A549 (cell line): ENCODE measurements at regions of chr10 and their contacts with region 1.

Region 1: DNA sequence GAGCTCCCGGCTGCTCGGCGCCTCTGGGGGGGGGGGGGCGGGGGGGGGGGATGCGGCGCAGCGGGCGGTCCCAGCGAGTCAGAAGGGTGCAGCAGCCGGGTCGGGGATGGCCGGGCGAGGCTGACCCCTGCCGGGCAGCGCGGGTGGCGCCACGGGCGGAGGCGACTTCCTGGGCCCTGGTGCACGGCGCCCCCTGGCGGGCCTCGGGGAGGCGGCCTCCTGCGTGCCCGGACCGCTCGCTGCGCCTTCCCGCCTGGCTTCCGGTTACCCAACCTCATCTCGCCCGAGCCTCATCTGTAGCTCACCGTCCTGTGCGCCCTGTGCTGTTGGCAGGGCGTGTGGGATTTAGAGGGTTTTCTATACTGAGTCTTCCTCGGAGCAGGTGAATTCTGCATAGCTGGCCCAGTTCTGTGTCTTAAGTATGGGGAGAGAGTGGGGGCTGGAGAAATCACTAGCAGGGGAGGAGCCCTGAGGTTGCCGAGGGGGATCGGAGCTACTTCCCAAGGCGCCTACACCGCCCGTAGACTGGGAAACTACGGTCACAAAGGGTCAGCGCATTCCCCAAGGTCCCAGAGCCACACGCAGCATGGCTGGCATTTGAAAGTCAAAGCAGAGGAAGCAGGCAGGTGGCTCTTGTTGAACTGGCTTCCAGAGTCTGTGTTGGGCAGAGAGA is 28.3 kb upstream of the WDFY4 start:
- DNase-seq: peak; percentile 58 to 92
- ATAC-seq: peak; percentile 79 to 91
- H3K4me3 ChIP-seq: peak overlapping the region; percentile 56
- H3K27ac ChIP-seq: peak overlapping the region; percentile 74 to 88
- H3K4me1 ChIP-seq: 0 out of 3 replicates have a peak, but pooled peaks cover 3% of the 10 kb centered on the region
- CTCF ChIP-seq: peak; percentile 99
- EP300 ChIP-seq: no peak
- POLR2A ChIP-seq: no peak
- RAD21 ChIP-seq: peak; percentile 67 to 95

Region 2: DNA sequence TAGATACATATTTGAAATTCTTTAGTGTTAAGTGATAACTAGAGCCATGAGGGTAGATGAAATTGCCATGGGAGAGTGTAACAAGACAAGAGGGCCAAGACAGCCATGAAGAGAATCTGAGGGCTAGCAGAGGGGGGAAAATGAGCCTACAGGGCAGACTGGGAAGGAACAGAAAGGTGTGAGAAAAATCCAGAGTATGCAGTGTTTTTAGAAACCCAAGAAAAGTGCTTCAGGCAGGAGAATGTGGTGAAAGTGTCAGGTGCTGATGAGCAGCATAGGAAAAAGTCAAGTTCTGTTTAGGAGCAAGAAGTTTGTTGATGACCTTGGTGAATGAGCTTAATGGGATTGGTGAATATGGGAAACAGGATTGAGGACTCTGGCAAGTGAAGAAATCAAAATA is 286.8 kb before region 1 on chr10:
- CTCF ChIA-PET with region 1: interaction called, 97 read pairs
- POLR2A ChIA-PET with region 1: no interaction called
- DNase-seq: no peak
- ATAC-seq: no peak
- H3K4me3 ChIP-seq: no peak overlapping the region
- H3K27ac ChIP-seq: no peak overlapping the region
- H3K4me1 ChIP-seq: peaks cover 18% of the 10 kb centered on the region
- CTCF ChIP-seq: no peak
- EP300 ChIP-seq: no peak
- POLR2A ChIP-seq: no peak
- RAD21 ChIP-seq: no peak

Region 3: DNA sequence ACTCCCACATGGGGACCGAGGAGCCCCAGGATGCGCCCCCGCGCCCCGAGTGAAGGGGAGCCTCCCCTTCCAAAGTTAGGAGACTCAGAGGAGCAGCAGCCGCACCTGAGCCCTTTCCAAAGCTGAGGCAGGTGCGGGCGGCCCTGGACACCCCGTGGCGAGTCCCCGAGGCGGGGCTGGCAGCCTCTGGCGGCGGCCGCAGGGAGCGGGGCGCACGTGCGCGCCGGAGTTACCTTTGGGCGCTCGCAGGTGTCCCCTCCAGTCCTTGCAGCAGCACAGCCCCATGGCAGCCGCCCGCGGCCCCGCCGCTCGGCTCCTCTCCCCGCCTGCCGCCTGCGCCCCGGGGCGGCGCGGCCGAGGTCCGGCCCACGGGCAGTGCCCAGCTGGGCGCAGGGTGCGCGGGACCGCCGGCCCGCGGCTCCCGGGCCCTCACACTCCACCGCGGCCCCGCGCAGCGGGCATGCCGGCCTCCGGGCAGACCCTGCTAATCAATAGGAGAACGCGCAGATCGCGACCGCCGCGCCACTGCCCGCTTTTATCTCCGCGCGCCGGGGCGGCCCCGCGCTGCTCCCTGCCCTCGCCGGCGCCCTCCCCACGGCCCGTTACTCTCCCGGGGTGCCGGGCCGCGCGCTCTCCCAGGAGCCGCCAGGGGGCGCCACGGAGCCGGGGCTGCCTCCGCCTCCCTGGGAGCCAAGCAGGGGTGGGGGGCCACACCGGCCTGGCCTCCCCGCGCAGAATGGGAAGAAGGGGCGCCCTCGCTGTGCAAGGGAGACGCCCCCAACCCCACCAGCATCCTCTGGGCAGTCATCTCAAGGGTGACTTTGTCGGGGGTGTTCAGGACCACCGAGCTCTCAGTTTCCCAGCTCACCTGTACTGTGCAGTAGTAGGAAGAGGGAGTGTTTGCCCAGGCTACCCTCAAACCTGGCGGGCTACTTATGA is 132.3 kb before region 1 on chr10:
- CTCF ChIA-PET with region 1: interaction called, 26 read pairs
- POLR2A ChIA-PET with region 1: no interaction called
- DNase-seq: peak; percentile 29 to 43
- ATAC-seq: peak; percentile 75 to 87
- H3K4me3 ChIP-seq: peak overlapping the region; percentile 50
- H3K27ac ChIP-seq: peak overlapping the region; percentile 48 to 80; a peak in 5 of 6 replicates
- H3K4me1 ChIP-seq: 0 out of 3 replicates have a peak, but pooled peaks cover 3% of the 10 kb centered on the region
- CTCF ChIP-seq: peak; percentile 72
- EP300 ChIP-seq: no peak
- POLR2A ChIP-seq: no peak
- RAD21 ChIP-seq: peak in 1 of 2 experiments; percentile 29; a peak in 1 of 5 replicates

Region 4: GRCh38 chr10:48608279-48608681 is 48.1 kb before region 1 on chr10:
- CTCF ChIA-PET with region 1: interaction called, 112 read pairs
- POLR2A ChIA-PET with region 1: interaction called, 4 read pairs
- DNase-seq: peak; percentile 57 to 72
- ATAC-seq: peak; percentile 66 to 87; a peak in 5 of 6 replicates
- H3K4me3 ChIP-seq: no peak overlapping the region
- H3K27ac ChIP-seq: no peak overlapping the region
- H3K4me1 ChIP-seq: peaks cover 5% of the 10 kb centered on the region; the same call in 1 of the 3 replicates
- CTCF ChIP-seq: peak; percentile 49
- EP300 ChIP-seq: no peak
- POLR2A ChIP-seq: no peak
- RAD21 ChIP-seq: peak; percentile 16 to 39; a peak in 2 of 5 replicates

Region 5: DNA sequence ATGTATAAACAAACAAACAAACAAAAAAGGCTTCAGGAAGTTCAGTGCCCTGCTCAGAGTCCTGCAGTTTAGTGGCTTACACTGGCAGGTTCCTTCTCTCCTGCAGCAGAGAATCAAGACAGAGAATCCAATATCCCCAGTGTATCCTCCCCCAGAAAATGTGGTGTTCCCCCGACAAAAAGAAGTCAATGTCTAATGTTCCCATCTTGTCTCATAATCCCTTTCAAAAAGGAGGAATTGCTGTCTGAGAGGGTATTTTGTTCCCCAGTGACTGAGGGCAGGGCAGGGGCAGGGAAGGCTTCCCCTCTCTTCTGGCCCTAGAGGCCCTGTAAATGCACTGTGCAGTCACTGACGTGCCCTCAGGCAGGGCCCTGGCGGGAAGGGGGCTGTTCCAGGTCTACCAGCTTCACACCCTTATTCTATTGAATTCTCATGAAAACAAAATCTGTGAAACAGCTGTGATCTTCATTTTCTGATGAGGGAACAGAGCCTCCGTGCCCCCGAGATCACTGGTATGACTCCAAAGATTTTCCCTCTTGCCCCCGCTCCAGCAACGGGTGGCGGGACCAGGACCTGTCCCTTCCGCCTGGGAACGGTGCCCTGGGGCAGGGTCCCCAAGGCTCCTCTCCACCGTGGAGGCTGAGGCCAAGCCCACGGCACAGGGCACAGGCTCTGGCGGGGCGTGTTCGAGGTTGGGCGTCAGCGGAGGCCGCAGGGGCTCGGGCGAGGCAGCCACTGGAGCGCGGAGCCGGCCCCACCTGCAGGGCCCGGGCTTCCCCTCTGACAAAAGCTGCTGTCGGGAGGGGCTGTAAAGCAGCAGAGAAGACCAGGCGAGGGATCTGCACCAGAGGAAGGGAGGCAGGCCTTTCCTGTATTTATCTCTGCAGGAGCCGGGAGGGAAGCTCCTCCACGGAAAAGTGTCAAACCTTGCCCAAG is 14.9 kb after region 1 on chr10:
- CTCF ChIA-PET with region 1: interaction called, 24 read pairs
- POLR2A ChIA-PET with region 1: no interaction called
- DNase-seq: no peak
- ATAC-seq: no peak
- H3K4me3 ChIP-seq: no peak overlapping the region
- H3K27ac ChIP-seq: no peak overlapping the region
- H3K4me1 ChIP-seq: no peaks in the 10 kb centered on the region
- CTCF ChIP-seq: no peak
- EP300 ChIP-seq: no peak
- POLR2A ChIP-seq: no peak
- RAD21 ChIP-seq: no peak

Region 6: DNA sequence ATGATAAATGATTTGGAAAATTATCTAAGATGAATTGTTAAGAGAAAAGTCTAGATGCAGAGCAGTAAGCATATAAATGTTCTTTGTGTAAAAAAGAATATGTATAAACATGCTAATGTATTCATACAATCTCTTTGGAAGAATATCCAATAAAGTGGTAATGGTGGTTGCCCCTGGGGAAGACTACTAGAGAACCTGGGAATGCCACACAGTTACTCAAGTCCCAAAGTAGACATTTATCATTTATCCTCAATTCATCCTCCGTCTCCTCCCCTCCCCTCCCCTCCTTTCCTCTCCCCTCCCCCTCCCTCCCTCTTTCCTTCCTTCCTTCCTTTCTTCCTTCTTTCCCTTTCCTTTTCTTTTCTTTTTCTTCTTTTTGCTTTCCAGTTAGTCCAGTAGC is 231.6 kb after region 1 on chr10:
- CTCF ChIA-PET with region 1: no interaction called
- POLR2A ChIA-PET with region 1: no interaction called
- DNase-seq: no peak
- ATAC-seq: no peak
- H3K4me3 ChIP-seq: no peak overlapping the region
- H3K27ac ChIP-seq: no peak overlapping the region
- H3K4me1 ChIP-seq: no peaks in the 10 kb centered on the region
- CTCF ChIP-seq: no peak
- EP300 ChIP-seq: no peak
- POLR2A ChIP-seq: no peak
- RAD21 ChIP-seq: no peak

Region 7: GRCh38 chr10:49518982-49519578 is 862.7 kb after region 1 on chr10:
- CTCF ChIA-PET with region 1: interaction called, 97 read pairs
- POLR2A ChIA-PET with region 1: no interaction called
- DNase-seq: peak; percentile 50 to 59
- ATAC-seq: peak; percentile 79 to 91
- H3K4me3 ChIP-seq: no peak overlapping the region
- H3K27ac ChIP-seq: no peak overlapping the region
- H3K4me1 ChIP-seq: no peaks in the 10 kb centered on the region
- CTCF ChIP-seq: peak; percentile 58
- EP300 ChIP-seq: no peak
- POLR2A ChIP-seq: no peak
- RAD21 ChIP-seq: peak; percentile 63 to 69